Activated CD4-positive, alpha-beta memory T cell treated with anti-CD3 and anti-CD28 coated beads for 36 hours (primary cell): ENCODE measurements at regions of chr3 and their contacts with region 1.

Region 1: GRCh38 chr3:112561731-112562688 is at the starts of genes ATG3 and SLC35A5:
- DNase-seq: peak; percentile 99
- H3K4me3 Mint-ChIP-seq: peak within 1 kb of the TSS; percentile 87
- H3K27ac Mint-ChIP-seq: peak within 1 kb of the TSS; percentile 98
- H3K4me1 Mint-ChIP-seq: peaks cover 31% of the 10 kb centered on the region
- H3K27me3 Mint-ChIP-seq: no peaks in the 10 kb centered on the region
- total RNA-seq, gene ATG3: 58.1 to 59.5 TPM
- total RNA-seq, gene SLC35A5: 15.5 to 17.8 TPM

Region 2: DNA sequence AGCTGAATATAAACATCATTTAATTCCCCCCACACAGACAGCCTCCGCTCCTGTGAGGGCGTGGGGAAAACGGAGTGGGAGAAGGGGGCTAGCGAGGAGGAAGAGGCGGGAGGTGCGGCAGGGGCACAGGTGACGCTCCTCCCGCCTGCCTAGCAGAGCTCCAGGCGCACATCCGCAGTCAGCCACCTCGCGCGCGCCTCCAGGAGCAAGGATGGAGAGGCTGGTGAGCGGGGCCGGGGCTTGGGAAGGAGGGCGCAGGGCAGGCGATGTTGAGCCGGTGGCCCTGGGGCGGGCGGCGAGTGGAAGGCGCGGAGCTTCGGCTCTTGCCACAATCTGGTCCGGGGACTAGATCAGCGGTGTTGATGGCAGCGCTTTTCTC is 229.0 kb before region 1 on chr3 and contains the start of gene CD200:
- CTCF ChIA-PET with region 1: interaction called, 4 read pairs
- POLR2A ChIA-PET with region 1: interaction called, 7 read pairs
- intact Hi-C with region 1: loop called (anchors 2 kb)
- DNase-seq: peak; percentile 71
- H3K4me3 Mint-ChIP-seq: peak within 1 kb of the TSS; percentile 87
- H3K27ac Mint-ChIP-seq: peak within 1 kb of the TSS; percentile 88
- H3K4me1 Mint-ChIP-seq: peaks cover 46% of the 10 kb centered on the region
- H3K27me3 Mint-ChIP-seq: no peaks in the 10 kb centered on the region
- total RNA-seq, gene CD200: 34.2 to 34.5 TPM

Region 3: DNA sequence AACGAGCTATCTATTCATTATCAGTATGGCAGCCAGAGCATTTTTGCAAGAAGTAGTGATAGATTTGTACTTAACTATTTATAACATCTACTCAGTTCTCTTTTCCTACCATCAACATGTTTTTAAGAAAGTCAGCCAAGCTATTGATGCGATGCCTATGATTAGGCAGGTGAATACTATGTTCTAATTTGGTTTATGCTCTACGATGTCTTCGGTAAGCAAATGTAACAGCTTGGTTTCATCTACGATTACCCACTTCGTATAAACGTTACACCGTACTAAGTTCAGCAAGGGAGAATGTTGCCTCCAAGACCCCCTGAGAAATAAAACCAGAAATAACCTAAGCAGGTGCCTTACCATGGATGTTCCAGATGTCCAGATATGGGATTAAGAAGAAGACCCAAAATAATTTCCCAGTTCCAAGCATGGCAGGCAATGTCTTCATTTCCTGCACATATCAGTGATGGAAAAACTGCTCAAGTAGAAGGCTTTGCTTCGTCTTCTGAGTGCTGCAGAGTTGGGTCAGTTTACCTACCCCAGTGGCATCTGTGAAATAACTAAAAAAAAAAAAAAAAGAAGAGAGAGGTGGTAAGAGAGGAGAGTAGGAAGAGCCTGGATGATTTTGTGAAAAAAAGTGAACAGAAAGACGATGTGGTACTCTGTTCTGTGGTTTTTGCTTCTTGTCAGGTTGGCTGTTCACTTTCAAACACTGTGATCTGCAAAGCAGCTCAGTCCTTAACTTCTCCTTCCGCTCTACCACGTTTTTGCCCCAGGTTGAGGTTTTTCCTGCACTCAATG is 62.9 kb before region 1 on chr3 and contains the start of gene BTLA:
- CTCF ChIA-PET with region 1: no interaction called
- POLR2A ChIA-PET with region 1: interaction called, 3 read pairs
- intact Hi-C with region 1: loop called (anchors 2 kb)
- DNase-seq: peak; percentile 59
- H3K4me3 Mint-ChIP-seq: peak within 1 kb of the TSS; percentile 99
- H3K27ac Mint-ChIP-seq: peak within 1 kb of the TSS; percentile 98
- H3K4me1 Mint-ChIP-seq: peaks cover 55% of the 10 kb centered on the region
- H3K27me3 Mint-ChIP-seq: no peaks in the 10 kb centered on the region
- total RNA-seq, gene BTLA: 17.3 to 18.7 TPM

Region 4: GRCh38 chr3:112847692-112848091 is 285.7 kb after region 1 on chr3:
- CTCF ChIA-PET with region 1: no interaction called
- POLR2A ChIA-PET with region 1: no interaction called
- intact Hi-C with region 1: no loop called
- DNase-seq: peak; percentile 67
- H3K4me3 Mint-ChIP-seq: no peak overlapping the region
- H3K27ac Mint-ChIP-seq: peak overlapping the region; percentile 9
- H3K4me1 Mint-ChIP-seq: peaks cover 30% of the 10 kb centered on the region
- H3K27me3 Mint-ChIP-seq: no peaks in the 10 kb centered on the region

Region 5: GRCh38 chr3:112990672-112991602 is 428.9 kb after region 1 on chr3 and contains the start of gene GTPBP8:
- CTCF ChIA-PET with region 1: no interaction called
- POLR2A ChIA-PET with region 1: interaction called, 3 read pairs
- intact Hi-C with region 1: loop called (anchors 1 kb)
- DNase-seq: peak; percentile 93
- H3K4me3 Mint-ChIP-seq: peak within 1 kb of the TSS; percentile 91
- H3K27ac Mint-ChIP-seq: peak within 1 kb of the TSS; percentile 94
- H3K4me1 Mint-ChIP-seq: peaks cover 57% of the 10 kb centered on the region
- H3K27me3 Mint-ChIP-seq: no peaks in the 10 kb centered on the region
- total RNA-seq, gene GTPBP8: 34.7 to 35.7 TPM

Region 6: DNA sequence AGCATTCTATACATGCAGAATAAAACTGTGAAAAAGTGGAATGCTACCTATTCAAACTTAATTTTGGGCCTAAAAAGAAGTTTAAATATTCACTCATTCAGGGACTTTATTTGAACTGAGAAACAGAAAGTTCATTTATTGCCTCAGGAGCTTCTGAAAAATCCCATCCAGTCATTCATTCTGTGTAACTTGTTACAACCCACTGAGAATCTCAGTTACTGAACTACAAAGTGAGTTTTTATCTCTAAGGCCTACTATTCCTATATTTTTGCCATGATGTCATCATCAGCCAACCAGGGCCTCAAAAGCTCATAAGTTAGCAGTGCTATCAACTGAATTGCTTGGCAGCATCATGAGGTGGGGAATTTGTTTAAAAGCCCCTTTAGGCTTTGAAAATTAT is 551.4 kb after region 1 on chr3:
- CTCF ChIA-PET with region 1: no interaction called
- POLR2A ChIA-PET with region 1: no interaction called
- intact Hi-C with region 1: loop called (anchors 2 kb)
- DNase-seq: no peak
- H3K4me3 Mint-ChIP-seq: no peak overlapping the region
- H3K27ac Mint-ChIP-seq: no peak overlapping the region
- H3K4me1 Mint-ChIP-seq: peaks cover 35% of the 10 kb centered on the region
- H3K27me3 Mint-ChIP-seq: no peaks in the 10 kb centered on the region